Activated B cell treated with CpG ODN at 0.5 μM for 24 hours (primary cell): ENCODE measurements at regions of chr11 and their contacts with region 1.

Region 1: DNA sequence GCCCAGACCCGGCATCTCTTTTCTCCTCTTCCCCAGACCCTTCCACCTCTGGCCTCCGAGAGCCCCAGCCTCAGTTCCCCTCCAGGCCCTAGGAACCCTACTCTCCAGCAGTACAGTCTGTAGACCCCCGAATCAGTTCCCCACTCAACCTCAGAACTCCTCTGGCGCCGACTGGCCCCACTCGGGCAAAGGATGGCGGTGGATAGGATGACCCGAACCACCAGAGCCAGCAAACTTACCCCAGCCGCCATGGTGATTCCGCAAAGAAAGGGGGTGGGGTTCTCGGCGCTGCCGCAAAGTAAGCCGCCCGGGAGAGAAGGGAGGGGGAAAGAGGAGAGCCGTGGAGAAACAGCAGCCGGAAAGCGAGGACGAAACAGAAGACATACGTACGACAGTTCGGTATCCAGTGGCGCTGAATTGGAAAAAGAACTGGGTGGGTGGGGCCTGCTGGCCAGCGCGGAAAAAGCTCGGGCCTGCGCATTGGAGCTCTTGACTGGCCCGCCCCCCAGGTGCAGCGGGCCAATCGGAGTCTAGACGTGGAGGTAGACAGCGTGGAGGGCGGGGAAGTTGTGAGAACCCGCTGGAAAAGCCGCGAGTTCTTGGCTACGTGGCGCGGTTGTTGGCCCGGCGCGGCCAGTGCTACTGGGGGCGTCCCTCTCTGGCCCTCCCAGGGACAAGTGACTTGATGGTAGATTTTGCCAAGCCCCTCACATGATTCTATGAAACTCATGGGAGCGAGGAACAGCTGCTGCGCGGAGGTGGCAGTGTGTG is at the start of gene EEF1G:
- DNase-seq: peak; percentile 92
- ATAC-seq: peak; percentile 94
- H3K4me3 Mint-ChIP-seq: peak within 1 kb of the TSS; percentile 97
- H3K27ac Mint-ChIP-seq: peak within 1 kb of the TSS; percentile 94
- H3K4me1 Mint-ChIP-seq: peaks cover 51% of the 10 kb centered on the region
- H3K27me3 Mint-ChIP-seq: no peaks in the 10 kb centered on the region
- CTCF ChIP-seq: no peak
- total RNA-seq, gene EEF1G: 2,373 and 2,524 TPM in 2 replicates

Region 2: DNA sequence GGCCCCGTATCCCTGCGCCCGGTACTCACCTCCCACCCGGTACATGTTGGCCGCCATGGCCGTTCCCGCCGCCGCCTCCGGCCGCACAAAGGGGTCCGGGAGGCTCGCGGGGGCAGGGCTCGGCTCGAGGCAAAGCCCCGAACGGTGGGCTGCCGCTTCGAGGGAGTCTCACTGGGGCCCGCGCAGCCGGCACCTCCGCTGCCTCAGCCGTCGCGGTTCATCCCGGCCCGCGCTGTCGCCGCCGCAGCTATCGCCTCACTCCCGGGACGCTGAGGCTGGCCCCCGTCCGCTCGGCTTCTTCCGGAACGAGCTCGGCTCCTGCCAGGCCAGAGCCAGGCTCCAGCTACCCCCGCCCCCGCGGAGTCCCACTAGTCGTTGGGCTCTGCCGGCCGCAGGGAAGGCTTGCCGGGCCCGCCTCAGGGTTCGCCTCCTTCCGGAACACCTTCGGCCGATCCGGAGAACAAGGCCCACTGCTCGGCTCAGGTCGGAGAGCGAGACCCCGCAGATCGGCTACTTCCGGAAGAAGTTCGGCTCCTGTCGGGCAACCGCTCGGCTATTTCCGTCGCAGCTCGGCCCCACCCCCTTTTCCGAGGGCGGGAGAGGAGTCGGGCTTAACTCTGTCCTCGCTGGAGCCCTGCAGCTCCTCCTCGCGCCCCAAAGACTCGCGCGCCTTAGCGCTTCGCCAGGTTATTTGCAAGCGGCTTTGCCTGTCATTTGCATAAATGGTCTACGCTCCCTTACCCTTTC is 27.8 kb after region 1 on chr11 and contains the start of gene MTA2:
- CTCF ChIA-PET with region 1: no interaction called
- POLR2A ChIA-PET with region 1: interaction called, 23 read pairs
- intact Hi-C with region 1: loop called (anchors 1 kb)
- DNase-seq: peak; percentile 100
- ATAC-seq: peak; percentile 81
- H3K4me3 Mint-ChIP-seq: peak within 1 kb of the TSS; percentile 92
- H3K27ac Mint-ChIP-seq: peak within 1 kb of the TSS; percentile 97
- H3K4me1 Mint-ChIP-seq: peaks cover 45% of the 10 kb centered on the region
- H3K27me3 Mint-ChIP-seq: no peaks in the 10 kb centered on the region
- CTCF ChIP-seq: no peak
- total RNA-seq, gene MTA2: 170 and 175 TPM in 2 replicates

Region 3: DNA sequence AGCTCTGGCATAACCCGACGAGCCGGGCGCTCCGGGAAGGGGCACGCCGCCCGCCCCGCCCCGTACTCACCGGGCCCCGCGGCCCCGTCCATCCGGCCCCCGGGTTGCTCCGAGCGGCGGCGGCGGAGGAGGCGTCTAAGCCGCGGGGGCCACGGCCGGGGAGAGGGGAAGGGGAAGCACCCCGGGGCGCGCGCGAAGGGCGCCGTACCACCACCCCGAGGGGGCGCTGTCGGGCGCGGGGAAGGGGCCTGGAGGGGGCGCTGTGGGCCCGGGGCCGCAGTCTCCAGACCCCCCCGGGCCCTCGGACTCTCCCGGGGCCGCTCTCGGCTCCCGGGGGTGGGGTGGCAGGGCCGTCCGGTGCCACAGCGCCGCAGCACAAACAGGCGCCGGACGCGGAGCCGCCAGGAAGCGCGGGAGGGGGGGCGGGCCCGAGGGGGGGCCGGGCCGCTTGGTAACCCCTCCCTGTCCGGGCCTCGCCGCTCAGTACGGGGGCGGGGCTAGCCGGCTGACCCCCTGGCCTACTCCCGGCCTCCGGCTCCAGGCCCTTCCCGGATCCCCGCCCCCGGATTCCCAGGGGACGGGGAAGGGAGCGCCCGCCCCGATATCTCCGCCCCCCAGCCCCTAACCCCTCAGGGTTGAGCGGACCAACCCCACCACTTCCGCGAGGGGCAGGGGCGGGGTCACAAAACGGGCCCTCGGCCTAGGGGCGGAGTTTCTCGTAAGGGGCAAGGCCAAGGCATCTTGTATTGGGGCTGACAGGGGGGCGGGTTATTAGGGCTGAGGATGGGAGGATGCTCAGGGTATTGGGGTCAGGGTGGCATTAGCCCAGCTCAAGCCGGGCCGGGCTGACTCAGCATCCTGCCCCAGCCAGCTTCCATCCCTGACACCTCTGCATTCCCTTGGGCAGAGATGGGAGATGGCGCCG is 38.9 kb after region 1 on chr11 and contains the starts of genes EML3 and ROM1:
- CTCF ChIA-PET with region 1: interaction called, 3 read pairs
- POLR2A ChIA-PET with region 1: interaction called, 14 read pairs
- intact Hi-C with region 1: loop called (anchors 1 kb)
- DNase-seq: peak; percentile 95
- ATAC-seq: peak; percentile 82
- H3K4me3 Mint-ChIP-seq: peak within 1 kb of the TSS; percentile 93
- H3K27ac Mint-ChIP-seq: peak within 1 kb of the TSS; percentile 95
- H3K4me1 Mint-ChIP-seq: peaks cover 27% of the 10 kb centered on the region
- H3K27me3 Mint-ChIP-seq: no peaks in the 10 kb centered on the region
- CTCF ChIP-seq: peak; percentile 59
- total RNA-seq, gene EML3: 115 and 128 TPM in 2 replicates
- total RNA-seq, gene ROM1: 0.89 and 2.6 TPM in 2 replicates

Region 4: DNA sequence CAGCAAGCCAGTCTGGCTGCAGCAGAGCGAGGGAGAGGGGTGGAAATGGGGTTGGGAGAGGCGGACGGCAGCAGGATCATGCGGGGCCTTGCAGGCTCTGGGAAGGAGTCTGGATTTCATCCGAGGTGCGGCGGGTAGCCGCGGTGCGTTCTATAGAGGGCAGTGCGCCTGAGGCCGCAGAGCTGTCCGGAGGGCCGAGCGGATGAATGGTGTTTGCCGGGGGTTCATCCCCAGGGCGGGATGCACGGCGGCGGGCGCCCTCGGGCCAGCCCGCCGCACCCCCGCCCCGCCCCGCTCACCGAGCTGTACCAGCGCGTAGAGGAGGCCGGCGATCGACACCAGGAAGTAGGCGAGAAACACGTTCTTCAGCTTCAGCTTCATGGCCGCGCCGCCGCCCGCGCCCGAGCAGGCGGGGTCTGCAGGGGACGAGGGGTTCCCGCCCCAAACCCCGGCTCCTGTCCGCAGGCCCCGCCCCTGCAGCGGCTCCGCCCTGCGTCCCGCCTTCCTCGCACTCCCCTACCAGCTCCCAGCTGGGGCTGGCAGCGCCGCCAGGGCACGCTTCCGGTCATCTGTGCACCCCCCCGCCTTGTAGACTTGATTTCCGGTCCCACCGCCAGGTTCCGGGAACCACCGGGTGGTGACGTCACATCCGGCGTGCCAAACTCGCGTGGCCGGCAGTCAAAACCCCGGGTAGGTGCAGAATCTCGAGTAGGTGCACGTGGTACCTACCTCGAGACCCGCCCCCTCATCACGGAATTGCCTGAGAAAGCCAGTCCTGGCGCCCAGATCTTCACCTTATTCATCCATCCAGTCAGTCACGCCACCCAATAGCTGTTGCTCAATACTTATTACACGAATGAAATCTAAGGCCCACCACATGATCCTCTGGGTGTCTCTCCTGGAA is 48.0 kb after region 1 on chr11 and contains the start of gene B3GAT3:
- CTCF ChIA-PET with region 1: no interaction called
- POLR2A ChIA-PET with region 1: interaction called, 6 read pairs
- intact Hi-C with region 1: loop called (anchors 1 kb)
- DNase-seq: peak; percentile 93
- ATAC-seq: peak; percentile 92
- H3K4me3 Mint-ChIP-seq: peak within 1 kb of the TSS; percentile 90
- H3K27ac Mint-ChIP-seq: peak within 1 kb of the TSS; percentile 93
- H3K4me1 Mint-ChIP-seq: peaks cover 19% of the 10 kb centered on the region
- H3K27me3 Mint-ChIP-seq: no peaks in the 10 kb centered on the region
- CTCF ChIP-seq: no peak
- total RNA-seq, gene B3GAT3: 48.8 and 56.6 TPM in 2 replicates

Region 5: DNA sequence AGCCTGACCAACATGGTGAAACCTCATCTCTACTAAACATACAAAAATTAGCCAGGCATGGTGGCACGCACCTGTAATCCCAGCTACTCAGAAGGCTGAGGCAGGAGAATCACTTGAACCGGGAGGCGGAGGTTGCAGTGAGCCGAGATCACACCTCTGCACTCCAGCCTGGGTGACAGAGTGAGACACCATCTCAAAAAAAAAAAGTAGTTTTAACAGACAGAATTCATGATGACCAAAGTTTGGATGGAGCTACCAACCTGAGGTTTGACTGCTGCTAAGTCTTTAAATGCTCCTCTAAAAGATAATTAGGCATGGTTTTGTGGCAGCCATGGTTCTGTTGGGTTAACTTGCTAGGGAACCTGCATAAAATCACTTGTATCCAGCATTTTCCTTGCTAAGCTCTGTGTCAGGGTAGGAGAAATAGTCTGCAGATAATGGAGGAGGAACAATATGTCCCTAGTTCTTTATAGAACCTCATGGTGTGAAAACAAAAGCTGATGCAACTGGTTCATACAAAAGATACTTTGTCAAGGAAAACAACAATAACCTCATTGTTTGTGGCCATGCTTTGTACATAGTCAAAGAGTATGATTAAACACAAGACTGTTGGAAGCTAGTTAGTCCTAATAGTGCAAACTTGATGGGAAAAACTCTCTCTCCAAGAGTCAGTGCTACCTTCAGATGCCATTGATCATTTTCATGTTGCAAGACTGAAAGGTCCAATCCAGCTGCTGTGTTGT is 1009.3 kb after region 1 on chr11:
- CTCF ChIA-PET with region 1: no interaction called
- POLR2A ChIA-PET with region 1: no interaction called
- intact Hi-C with region 1: no loop called
- DNase-seq: no peak
- ATAC-seq: no peak
- H3K4me3 Mint-ChIP-seq: no peak overlapping the region
- H3K27ac Mint-ChIP-seq: no peak overlapping the region
- H3K4me1 Mint-ChIP-seq: no peaks in the 10 kb centered on the region
- H3K27me3 Mint-ChIP-seq: no peaks in the 10 kb centered on the region
- CTCF ChIP-seq: no peak